Activated CD4-positive, alpha-beta memory T cell treated with anti-CD3 and anti-CD28 coated beads for 36 hours (primary cell): ENCODE measurements at regions of chr7 and their contacts with region 1.

Region 1: GRCh38 chr7:111486472-111487142 is 75.7 kb downstream of the IMMP2L start:
- DNase-seq: no peak
- H3K4me3 Mint-ChIP-seq: no peak overlapping the region
- H3K27ac Mint-ChIP-seq: no peak overlapping the region
- H3K4me1 Mint-ChIP-seq: no peaks in the 10 kb centered on the region
- H3K27me3 Mint-ChIP-seq: no peaks in the 10 kb centered on the region

Region 2: GRCh38 chr7:109844362-109844761 is 1642.2 kb before region 1 on chr7:
- CTCF ChIA-PET with region 1: no interaction called
- POLR2A ChIA-PET with region 1: no interaction called
- intact Hi-C with region 1: loop called (anchors 10 kb)
- DNase-seq: no peak
- H3K4me3 Mint-ChIP-seq: no peak overlapping the region
- H3K27ac Mint-ChIP-seq: no peak overlapping the region
- H3K4me1 Mint-ChIP-seq: no peaks in the 10 kb centered on the region
- H3K27me3 Mint-ChIP-seq: no peaks in the 10 kb centered on the region

Region 3: DNA sequence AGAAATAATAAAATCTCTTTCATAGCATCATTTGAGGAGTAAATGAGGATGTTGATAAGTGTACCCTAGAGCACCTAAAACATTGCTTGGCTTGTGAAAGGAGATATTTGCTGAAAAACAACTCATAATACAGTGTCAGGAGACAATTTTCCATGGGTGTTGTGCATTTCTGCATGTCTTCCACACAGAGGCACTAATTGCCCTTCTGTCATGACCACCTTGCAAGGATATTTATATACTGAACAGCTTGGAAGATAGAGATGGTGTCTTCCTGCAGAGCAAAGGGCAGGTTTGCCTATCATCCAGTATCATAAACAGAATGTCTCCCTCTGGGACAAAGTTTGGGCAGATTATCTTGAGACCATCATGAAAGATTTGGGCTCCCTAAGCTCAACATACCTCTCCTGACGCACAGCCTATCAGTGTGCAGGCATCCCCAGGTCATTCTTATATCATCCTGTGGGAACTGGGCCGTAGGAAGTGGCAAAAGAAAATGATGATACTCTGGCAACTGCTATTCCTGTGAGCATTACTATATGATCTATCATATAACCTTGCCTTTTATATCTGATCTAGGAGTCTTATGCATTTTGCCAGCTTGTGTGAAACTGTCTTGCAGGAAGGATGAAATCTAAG is 890.8 kb before region 1 on chr7:
- CTCF ChIA-PET with region 1: no interaction called
- POLR2A ChIA-PET with region 1: no interaction called
- intact Hi-C with region 1: loop called (anchors 10 kb)
- DNase-seq: no peak
- H3K4me3 Mint-ChIP-seq: no peak overlapping the region
- H3K27ac Mint-ChIP-seq: no peak overlapping the region
- H3K4me1 Mint-ChIP-seq: no peaks in the 10 kb centered on the region
- H3K27me3 Mint-ChIP-seq: no peaks in the 10 kb centered on the region

Region 4: DNA sequence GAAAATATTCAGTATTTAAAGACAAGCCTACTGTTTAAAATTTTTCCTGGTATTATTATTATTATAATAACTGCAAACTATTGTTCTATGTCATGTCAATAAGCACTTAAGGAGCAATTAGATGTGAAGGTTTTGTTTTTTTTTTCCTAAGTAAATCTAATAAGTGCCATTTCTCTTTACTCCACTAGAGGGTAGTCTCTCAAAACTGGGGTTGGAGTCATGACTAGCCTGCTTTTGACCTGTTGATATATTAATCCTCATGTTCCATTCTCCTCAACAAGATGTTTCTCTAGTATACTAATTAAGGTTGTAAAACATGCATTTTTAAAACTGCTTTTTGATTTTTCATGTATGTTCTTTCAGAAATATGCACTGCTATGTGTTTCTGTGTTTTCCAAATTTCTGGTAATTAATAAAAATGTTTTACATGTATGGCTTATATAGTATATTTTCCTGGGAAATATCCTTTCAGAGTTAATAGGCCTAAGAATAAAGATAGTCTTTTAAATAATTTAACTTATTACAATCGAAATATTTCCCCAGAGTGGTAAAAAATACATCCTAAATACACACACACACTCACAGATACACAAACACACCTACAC is 396.7 kb before region 1 on chr7:
- CTCF ChIA-PET with region 1: no interaction called
- POLR2A ChIA-PET with region 1: no interaction called
- intact Hi-C with region 1: loop called (anchors 2 kb)
- DNase-seq: no peak
- H3K4me3 Mint-ChIP-seq: no peak overlapping the region
- H3K27ac Mint-ChIP-seq: no peak overlapping the region
- H3K4me1 Mint-ChIP-seq: peaks cover 71% of the 10 kb centered on the region
- H3K27me3 Mint-ChIP-seq: no peaks in the 10 kb centered on the region

Region 5: DNA sequence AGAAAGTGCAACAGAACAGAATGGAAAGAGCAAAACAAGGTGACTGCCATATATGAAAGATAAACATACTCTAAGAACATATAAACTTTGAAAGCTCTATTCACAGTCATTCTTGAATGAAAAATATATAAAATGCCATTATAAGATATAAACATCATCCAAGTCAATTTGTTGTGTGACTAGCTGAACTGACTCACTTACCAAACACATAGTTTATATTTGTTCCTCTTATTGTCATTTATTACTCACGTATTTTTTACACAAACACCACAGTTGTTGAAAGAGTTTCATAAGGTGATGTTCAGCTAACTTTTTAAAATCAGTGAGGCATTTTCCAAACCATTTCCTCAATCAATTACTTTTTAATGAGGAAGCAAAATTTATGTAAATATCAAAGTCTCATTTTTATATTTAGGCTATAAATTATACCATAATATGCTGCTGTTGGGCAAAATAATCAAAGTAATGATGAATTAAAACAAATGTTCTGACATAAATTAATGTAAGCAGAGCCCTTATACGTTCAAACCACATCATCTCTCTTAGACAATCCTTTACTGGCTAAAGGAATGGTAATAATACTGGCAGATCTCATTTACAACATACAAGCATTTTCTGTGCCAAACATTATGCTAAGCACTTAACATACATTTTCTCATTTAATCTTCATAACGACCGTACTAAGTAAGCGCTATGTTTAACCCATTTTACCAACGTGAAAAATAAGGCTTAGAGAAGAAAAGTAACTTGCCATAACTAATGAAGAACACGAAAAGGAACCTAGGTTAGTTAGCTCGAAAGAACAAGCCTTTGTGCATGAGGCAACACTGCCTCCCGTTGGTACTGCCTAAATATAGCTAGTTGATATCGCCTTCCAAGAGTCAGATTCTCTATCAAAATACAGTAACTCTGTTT is 388.3 kb before region 1 on chr7:
- CTCF ChIA-PET with region 1: no interaction called
- POLR2A ChIA-PET with region 1: no interaction called
- intact Hi-C with region 1: loop called (anchors 2 kb)
- DNase-seq: peak; percentile 69
- H3K4me3 Mint-ChIP-seq: peak overlapping the region; percentile 15
- H3K27ac Mint-ChIP-seq: peak overlapping the region; percentile 51
- H3K4me1 Mint-ChIP-seq: peaks cover 36% of the 10 kb centered on the region
- H3K27me3 Mint-ChIP-seq: no peaks in the 10 kb centered on the region

Region 6: DNA sequence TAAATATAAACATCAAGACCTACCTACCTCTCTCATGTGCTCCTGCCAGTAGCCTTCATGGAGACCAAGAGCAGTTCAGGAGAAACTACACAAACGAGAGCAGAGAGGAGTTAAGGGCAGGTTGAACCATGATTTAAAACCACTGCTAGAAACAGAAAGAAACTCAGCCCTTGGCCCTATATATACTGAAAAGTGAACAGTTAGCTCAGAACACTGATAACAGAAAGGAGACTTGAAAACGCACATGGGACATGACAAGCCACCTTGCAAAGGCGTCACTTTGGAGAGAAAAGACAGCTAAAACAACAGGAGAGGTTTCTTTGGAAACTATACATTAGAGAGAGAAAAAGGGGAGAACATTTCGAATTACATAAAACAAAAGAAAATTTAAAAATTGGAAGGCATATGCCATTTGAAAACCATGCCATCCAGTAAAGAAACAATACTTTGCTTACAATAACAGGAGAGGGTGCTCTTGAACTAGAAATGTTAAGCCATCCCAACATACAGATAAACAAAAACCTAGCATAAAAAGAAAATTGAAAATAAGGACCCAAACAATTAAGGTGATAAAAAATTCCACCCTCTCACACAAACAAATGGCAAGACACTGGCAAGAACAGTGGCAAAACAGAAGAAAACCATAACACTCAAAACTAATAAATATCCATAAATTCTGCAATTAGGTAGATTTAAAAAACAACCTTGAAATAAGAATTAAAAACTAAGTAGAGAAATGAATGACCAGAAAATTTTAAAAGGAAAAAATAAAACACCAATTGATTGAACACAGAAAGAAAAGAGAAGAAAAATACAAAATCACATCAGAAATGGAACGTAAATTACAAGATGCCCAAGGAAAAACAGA is 157.0 kb before region 1 on chr7:
- CTCF ChIA-PET with region 1: no interaction called
- POLR2A ChIA-PET with region 1: no interaction called
- intact Hi-C with region 1: loop called (anchors 10 kb)
- DNase-seq: no peak
- H3K4me3 Mint-ChIP-seq: no peak overlapping the region
- H3K27ac Mint-ChIP-seq: no peak overlapping the region
- H3K4me1 Mint-ChIP-seq: peaks cover 6% of the 10 kb centered on the region
- H3K27me3 Mint-ChIP-seq: no peaks in the 10 kb centered on the region

Region 7: GRCh38 chr7:111424768-111425167 is 61.8 kb before region 1 on chr7:
- CTCF ChIA-PET with region 1: no interaction called
- POLR2A ChIA-PET with region 1: no interaction called
- intact Hi-C with region 1: no loop called
- DNase-seq: no peak
- H3K4me3 Mint-ChIP-seq: no peak overlapping the region
- H3K27ac Mint-ChIP-seq: no peak overlapping the region
- H3K4me1 Mint-ChIP-seq: no peaks in the 10 kb centered on the region
- H3K27me3 Mint-ChIP-seq: no peaks in the 10 kb centered on the region

Region 8: DNA sequence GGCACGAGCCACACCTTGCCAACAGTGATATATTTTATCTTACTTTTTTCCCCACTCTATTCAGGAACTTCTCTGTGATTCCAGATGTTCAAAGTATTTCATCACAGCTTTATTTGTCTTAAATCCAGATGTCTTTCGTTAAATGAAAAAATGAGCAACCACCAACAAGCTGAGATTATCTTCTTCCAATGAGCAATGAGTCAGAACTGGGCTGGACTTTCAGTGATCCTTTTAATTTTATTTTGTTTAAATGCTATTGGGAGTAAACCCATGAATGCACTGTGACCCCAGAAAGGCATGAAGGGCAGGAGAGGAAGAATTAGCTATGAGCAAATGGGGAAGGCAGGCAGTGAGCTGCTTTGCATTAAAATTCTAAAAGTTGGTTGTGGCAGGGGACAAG is 153.3 kb after region 1 on chr7:
- CTCF ChIA-PET with region 1: no interaction called
- POLR2A ChIA-PET with region 1: no interaction called
- intact Hi-C with region 1: no loop called
- DNase-seq: no peak
- H3K4me3 Mint-ChIP-seq: no peak overlapping the region
- H3K27ac Mint-ChIP-seq: no peak overlapping the region
- H3K4me1 Mint-ChIP-seq: no peaks in the 10 kb centered on the region
- H3K27me3 Mint-ChIP-seq: peaks cover 1% of the 10 kb centered on the region